HAP-1 (cell line): ENCODE measurements at regions of chr6 and their contacts with region 1.

Region 1: DNA sequence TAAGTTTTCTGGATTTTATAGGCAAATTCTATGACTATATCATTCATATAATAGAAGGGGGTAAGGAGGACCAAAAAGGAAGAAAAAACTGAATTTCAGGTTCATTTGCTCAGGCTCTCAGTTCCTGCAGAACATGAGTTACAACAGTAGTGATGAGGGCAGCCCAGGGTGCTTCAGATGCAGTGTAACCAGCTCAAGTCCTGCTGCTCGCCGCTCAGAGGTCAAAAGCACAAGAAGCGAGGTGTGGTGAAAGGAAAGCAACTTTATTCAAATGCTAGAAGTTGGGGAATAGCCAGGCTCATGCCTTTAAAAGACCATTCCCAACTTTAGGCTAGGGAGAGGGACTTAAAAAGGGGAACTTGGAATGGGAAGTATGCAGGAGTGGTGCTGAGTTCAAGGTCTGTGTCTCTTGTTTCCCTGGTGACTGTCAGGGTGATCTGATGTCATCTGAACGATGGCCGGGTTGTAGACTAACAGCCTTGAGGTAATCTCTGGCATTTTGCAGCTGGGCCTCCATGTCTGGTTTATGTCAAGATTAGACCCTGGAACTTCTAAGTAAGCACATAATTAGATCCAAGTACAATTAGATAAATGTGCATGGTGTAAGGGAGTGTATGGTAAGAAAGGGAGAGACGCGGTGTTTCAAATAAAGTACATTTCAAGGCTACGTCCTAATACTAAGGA is 14.5 kb upstream of the SEC63 start:
- DNase-seq: no peak
- H3K4me3 ChIP-seq: no peak overlapping the region
- H3K4me1 ChIP-seq: no peaks in the 10 kb centered on the region
- H3K27me3 ChIP-seq: no peaks in the 10 kb centered on the region

Region 2: DNA sequence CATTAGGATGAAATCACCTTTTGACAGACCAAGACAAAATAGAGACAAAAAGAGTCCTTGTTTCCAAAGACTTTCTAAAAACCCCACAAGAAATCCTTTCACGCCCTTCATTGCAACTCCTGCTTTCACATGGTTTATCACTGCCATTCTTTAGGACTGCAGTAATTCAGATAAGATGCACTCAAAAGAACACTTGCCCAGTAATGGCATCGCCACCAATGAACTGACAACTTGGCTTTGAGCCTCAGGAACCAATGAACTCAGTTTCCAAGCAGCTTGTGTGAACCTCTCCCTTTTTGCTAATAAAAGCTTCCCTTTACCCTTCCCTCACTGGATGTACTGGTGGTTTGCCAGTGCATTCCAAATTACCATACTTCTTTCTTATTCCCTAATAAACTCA is 80.2 kb after region 1 on chr6:
- in situ Hi-C with region 1: loop called (anchors 5 kb)
- DNase-seq: no peak
- H3K4me3 ChIP-seq: no peak overlapping the region
- H3K4me1 ChIP-seq: no peaks in the 10 kb centered on the region
- H3K27me3 ChIP-seq: no peaks in the 10 kb centered on the region